ENCODE measurements at regions of chr9 and their contacts with region 1.

Region 1: GRCh38 chr9:130107234-130107861 is 53.6 kb downstream of the GPR107 start:
- DNase-seq: peak; percentile 94
- H3K4me3 Mint-ChIP-seq: no peak overlapping the region
- H3K27ac Mint-ChIP-seq: peak overlapping the region; percentile 61
- H3K4me1 Mint-ChIP-seq: peaks cover 43% of the 10 kb centered on the region
- H3K27me3 Mint-ChIP-seq: no peaks in the 10 kb centered on the region

Region 2: GRCh38 chr9:129557192-129558036 is 549.9 kb before region 1 on chr9:
- CTCF ChIA-PET with region 1: no interaction called
- intact Hi-C with region 1: no loop called
- DNase-seq: no peak
- H3K4me3 Mint-ChIP-seq: no peak overlapping the region
- H3K27ac Mint-ChIP-seq: no peak overlapping the region
- H3K4me1 Mint-ChIP-seq: no peaks in the 10 kb centered on the region
- H3K27me3 Mint-ChIP-seq: no peaks in the 10 kb centered on the region

Region 3: GRCh38 chr9:130058154-130058553 is 49.2 kb before region 1 on chr9:
- CTCF ChIA-PET with region 1: no interaction called
- intact Hi-C with region 1: no loop called
- DNase-seq: no peak
- H3K4me3 Mint-ChIP-seq: no peak overlapping the region
- H3K27ac Mint-ChIP-seq: no peak overlapping the region
- H3K4me1 Mint-ChIP-seq: peaks cover 29% of the 10 kb centered on the region
- H3K27me3 Mint-ChIP-seq: no peaks in the 10 kb centered on the region

Region 4: DNA sequence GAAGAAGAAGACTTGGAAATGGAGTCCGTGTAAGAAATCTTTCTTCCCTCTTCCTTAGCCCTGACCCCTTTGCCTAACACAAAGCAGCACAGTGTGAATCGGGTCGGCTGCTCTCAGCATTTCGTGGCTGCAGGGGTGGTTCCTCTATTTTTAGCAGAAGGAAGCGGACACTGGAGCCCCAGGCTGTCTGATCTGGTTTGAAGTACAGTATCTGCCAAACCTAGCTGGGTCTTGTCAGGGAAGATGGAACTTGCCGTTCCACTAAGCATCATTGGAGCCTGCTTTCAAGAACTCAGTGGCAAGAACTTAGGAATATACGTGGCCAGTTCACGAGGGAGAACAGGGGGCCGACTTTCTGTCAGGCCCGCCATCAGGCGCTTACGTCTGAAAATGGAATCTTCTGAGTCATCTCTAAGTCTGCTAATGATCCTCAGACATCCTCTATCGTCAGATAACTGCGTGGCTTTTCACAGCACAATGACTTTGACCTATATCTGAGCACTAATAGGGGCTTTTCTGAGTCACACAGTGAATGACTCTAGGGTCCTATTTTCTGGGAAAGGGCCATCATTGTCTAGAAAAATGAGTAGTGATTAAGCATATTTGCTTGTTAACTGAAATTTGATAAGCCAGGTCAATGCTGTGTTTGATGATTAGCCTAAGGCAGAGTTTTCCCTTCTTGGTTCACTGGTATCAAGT is 21.5 kb after region 1 on chr9:
- CTCF ChIA-PET with region 1: interaction called, 19 read pairs
- intact Hi-C with region 1: loop called (anchors 1 kb)
- DNase-seq: peak; percentile 76
- H3K4me3 Mint-ChIP-seq: peak overlapping the region; percentile 71
- H3K27ac Mint-ChIP-seq: peak overlapping the region; percentile 99
- H3K4me1 Mint-ChIP-seq: peaks cover 52% of the 10 kb centered on the region
- H3K27me3 Mint-ChIP-seq: no peaks in the 10 kb centered on the region

Region 5: GRCh38 chr9:130172161-130172857 is 65.0 kb after region 1 on chr9 and contains the start of gene NCS1:
- CTCF ChIA-PET with region 1: interaction called, 8 read pairs
- intact Hi-C with region 1: loop called (anchors 5 kb)
- DNase-seq: peak; percentile 68
- H3K4me3 Mint-ChIP-seq: peak within 1 kb of the TSS; percentile 80
- H3K27ac Mint-ChIP-seq: no peak within 1 kb of the TSS
- H3K4me1 Mint-ChIP-seq: peaks cover 5% of the 10 kb centered on the region
- H3K27me3 Mint-ChIP-seq: peaks cover 12% of the 10 kb centered on the region
- total RNA-seq, gene NCS1: 22.4 to 23.3 TPM

Region 6: DNA sequence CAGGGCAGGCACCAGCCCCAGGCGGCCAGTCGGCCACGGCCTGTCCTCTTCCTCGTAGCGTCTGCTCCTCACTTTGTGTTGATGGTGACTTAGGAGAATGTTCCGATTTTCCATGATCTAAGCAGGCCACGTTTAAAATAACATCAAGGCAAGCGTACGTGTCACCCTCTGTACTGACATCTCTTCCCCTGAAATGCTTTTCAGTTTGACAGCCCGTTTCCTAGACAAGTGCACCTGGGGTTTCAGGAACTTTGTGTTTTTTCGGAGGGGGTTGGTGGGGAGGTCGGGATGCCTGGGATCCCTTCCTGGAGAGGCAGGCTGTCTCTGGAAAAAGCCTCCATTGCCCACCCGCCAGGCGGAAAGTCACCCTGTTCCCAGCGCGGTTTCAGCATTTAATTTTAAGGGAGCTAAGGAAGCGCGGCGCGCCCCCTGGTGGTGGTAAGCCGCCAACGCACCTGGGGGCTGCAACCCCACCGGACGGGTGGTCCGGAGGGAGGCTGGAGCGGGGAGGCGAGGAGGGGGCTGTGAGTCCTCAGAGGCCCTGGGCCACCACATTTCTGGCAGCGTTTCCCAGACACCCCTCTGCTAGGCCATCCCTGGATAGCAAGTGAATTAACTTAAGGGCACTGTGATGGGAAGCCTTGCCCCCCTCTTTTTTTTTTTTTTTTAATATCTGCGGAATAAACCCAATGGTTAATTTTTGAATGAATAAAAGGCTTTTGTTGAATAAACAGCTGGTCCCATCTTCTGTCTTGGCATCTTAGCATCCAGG is 128.7 kb after region 1 on chr9:
- CTCF ChIA-PET with region 1: interaction called, 42 read pairs
- intact Hi-C with region 1: loop called (anchors 1 kb)
- DNase-seq: peak; percentile 73
- H3K4me3 Mint-ChIP-seq: no peak overlapping the region
- H3K27ac Mint-ChIP-seq: no peak overlapping the region
- H3K4me1 Mint-ChIP-seq: peaks cover 27% of the 10 kb centered on the region
- H3K27me3 Mint-ChIP-seq: no peaks in the 10 kb centered on the region

Region 7: DNA sequence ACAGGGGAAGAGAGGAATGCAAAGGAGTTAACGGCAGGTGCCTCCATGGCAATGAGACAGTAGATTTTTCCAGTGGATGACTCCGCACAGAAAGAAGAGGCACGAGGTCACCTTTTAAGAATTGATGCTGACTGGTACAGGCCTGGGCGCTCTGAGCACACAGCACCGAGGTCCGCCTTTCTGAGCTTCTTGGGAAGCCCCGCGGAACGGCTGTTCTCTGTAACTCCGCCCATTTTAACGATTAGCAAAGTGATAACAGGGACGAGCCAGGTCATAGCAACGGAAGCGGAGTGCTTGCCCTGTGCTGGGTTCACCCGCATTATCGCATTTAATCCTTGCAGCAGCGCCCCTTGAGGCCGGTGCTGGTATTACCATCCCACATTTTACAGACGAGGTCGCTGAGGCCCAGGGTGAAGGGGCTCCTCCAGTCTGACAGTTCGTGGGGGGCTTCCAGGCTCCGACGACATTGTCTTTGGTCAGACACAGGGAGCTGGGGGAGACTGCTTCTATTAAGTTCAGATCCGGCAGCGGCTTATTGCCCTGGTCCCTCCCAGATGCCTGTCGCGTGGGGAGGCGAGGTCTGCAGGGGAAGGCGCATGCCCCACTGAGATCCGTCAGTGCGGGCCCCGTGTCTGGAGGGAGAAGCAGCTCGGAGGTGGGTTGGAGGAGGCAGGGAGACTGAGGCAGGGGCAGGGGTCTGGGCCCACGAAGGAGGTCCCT is 135.8 kb after region 1 on chr9:
- CTCF ChIA-PET with region 1: interaction called, 42 read pairs
- intact Hi-C with region 1: no loop called
- DNase-seq: peak; percentile 88
- H3K4me3 Mint-ChIP-seq: peak overlapping the region; percentile 20
- H3K27ac Mint-ChIP-seq: no peak overlapping the region
- H3K4me1 Mint-ChIP-seq: peaks cover 30% of the 10 kb centered on the region
- H3K27me3 Mint-ChIP-seq: no peaks in the 10 kb centered on the region

Region 8: DNA sequence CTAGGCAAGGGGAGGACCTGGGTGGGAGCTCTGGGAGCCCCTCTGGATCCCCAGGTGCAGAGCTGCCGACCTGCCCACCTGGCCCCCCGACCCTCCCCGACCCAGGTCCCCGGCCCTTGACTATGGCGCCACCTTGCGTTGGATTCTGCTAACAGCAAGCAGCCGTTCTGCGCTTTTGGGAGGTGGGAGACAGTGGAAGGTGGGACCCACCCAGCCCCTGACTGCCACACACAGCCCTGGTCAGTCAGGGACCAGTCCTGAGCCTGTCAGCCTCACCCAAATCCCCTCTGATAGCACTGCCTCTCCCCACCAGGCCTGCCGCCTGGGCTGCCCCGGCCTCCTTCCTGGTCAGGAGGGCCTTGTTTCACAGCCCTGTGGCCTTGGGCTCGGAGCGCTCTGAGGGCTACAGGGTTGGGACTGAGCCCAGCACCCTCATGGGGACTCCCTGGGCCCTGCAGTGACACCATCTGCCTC is 236.1 kb after region 1 on chr9:
- CTCF ChIA-PET with region 1: interaction called, 9 read pairs
- intact Hi-C with region 1: loop called (anchors 1 kb)
- DNase-seq: peak; percentile 58
- H3K4me3 Mint-ChIP-seq: no peak overlapping the region
- H3K27ac Mint-ChIP-seq: no peak overlapping the region
- H3K4me1 Mint-ChIP-seq: no peaks in the 10 kb centered on the region
- H3K27me3 Mint-ChIP-seq: no peaks in the 10 kb centered on the region

Region 9: GRCh38 chr9:130682490-130683121 is 575.3 kb after region 1 on chr9:
- CTCF ChIA-PET with region 1: no interaction called
- intact Hi-C with region 1: loop called (anchors 10 kb)
- DNase-seq: peak; percentile 74
- H3K4me3 Mint-ChIP-seq: peak overlapping the region; percentile 90
- H3K27ac Mint-ChIP-seq: no peak overlapping the region
- H3K4me1 Mint-ChIP-seq: peaks cover 8% of the 10 kb centered on the region
- H3K27me3 Mint-ChIP-seq: peaks cover 8% of the 10 kb centered on the region